ENCODE measurements at regions of chr11 and their contacts with region 1.

Region 1: GRCh38 chr11:18395735-18396504 is 1.6 kb downstream of the LDHA start:
- DNase-seq: peak; percentile 99

Region 2: DNA sequence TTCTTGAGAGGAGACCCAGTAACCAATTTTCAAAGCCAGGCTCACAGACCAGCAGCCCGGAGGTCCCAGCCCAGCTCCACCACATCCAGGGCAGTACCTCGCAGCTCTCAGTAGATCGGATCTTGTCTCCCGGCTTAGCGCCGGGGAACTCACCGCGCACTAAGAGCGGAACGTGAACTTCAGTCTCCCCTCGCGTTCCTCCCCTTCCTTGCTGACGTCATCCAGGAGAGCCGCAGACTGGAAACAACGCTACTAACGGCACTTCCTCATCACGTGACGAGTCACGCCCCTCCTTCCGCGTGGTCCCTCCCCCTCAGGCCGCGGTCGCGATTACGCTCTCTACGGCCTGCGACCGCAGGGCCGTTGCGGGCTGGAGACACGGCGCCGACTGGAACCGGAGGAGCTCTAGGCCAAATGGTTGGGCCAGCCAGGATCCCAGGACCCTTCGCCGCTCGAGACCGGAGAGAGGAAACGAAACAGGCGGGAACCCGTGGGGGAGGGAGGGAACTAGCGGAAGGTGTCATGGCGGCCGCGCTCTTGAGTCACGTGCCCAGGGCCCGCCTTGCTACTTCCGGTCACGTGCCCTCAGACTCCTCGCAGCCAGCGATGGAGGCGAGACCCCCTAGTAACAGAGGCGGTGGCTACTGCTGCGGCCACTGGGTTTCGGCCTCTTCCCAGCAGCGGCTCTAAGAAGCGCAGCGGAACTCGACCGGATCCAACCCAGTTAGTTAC is 73.8 kb before region 1 on chr11 and contains the starts of genes GTF2H1 and HPS5:
- intact Hi-C with region 1: loop called (anchors 1 kb)
- DNase-seq: peak; percentile 98
- total RNA-seq, gene GTF2H1: 23.6 TPM
- total RNA-seq, gene HPS5: 11.2 TPM

Region 3: DNA sequence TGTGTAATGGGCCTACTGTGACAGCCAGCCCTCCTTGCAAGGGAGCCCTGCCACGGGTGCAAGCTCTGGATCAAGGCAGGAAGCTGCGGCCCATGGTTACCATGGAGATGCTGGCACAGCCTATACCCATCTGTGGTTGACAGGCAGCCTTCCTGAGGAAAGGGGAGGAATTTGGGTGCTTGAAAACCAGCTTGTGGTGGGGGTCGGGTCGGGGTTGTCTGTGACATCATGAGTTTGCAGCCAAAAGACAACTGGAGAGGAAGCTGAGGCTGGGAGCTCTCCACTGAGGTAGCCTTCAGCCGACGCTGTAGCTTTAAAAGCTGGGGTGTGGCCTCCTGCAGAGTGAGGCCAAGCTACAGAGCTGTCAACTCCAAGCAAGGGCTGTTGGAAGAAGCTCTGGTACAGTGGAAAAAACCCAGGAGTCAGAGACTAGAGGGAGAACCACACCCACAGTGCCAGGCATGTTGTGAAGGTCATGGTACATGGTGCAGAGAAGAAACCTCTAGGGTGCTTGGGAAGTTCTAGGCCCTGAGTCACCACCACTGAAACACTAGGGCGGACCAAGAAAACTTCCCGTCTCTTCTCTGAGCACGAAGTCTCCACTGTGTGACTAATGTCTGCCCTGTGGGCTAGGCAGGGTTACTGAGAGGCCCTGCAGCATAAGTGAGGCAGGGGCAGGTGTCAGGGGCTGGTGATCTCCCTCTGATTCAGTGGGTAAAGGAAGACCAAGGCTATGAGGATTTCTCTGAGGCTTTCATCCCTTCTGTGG is 12.3 kb before region 1 on chr11:
- intact Hi-C with region 1: loop called (anchors 1 kb)
- DNase-seq: peak; percentile 84

Region 4: DNA sequence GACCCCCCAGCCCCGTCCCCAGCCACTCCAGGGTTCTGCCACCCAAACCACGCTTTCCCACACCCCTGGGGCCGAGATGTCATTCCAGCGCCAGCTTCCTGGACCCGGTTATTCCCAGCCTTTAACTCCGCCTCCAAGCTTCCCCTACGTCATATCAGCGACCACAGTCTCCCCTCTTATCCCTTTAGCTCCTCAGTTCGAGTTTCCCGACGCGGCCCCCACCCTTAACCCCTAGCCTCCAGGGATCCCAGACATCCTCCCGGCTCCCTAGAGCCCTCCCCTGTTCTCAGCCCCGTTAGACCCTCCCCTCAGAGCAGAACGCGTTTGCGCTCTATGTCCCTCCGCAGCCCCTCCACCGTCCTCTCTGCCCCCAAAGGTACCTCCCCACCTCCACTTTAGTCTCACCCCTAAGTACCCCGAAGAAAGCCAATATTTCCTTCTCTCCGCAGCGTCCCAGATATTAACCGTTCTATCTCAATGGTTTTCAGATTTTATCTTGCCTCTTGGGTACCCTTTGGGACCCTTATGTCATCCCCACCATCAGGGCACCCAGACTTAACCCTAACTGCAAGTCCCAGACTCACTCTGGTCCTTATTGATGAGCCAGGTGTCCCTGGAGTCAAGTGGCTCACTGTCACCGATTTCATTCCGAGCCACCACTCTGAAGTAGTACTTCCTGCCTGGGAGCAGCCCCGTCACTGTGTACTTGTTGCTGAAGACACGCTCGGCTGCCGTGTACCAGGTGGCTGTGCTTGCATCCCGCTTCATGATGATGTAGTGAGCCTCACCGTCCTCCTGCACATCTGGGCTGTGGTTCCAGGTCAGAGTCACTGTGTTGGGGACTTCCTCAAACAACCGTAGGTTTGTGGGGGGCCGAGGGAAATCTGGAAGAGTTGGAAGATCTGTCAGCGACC is 310.7 kb after region 1 on chr11:
- intact Hi-C with region 1: loop called (anchors 10 kb)
- DNase-seq: peak; percentile 74

Measured in cardiac septum (tissue), 1 donor.